Common myeloid progenitor, CD34-positive (primary cell): ENCODE measurements at regions of chr2 and their contacts with region 1.

Region 1: DNA sequence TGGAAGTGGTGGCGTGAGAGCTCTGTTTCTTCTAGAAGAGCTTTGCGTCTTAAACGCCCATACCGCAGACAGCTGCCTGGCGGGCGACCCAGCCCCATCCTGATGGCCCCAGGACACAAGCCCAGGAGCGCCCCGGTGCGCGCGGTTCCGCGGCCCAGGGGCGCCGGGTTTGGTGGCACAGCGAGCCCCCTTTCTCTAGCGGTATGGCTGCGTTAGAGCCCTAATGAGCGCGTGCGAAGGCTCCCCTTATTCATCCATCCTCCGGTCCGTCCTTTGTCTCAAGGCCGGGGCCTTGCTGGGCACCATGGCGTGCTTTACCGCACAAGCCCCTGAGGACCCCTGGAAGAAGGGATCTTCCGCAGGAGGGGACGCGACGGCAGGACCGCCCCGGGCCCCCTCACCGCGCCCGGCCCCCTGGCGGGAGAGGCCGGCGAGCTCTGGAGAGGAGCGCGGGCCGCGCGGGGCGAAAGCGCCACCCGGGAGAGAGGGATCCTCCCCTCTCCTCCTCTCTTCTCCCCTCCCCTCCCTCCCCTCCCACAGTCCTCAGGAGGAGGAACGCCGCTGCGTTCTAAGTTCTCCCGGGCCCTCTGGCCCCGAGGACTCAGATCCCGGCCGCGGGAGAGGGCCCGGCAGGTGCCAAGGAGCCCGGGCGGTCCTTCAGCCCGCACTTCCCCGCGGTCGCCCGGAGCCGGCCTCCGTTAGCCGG is 626 bp upstream of the SLC1A4 start:
- DNase-seq: peak; percentile 77 to 98 (median 79)
- H3K4me3 ChIP-seq: peak overlapping the region; percentile 69 to 88 (median 83)
- H3K27ac ChIP-seq: peak overlapping the region; percentile 93 to 98
- H3K4me1 ChIP-seq: peaks cover 7 to 71% (median 52%) of the 10 kb centered on the region in 4 experiments
- H3K27me3 ChIP-seq: no peaks in the 10 kb centered on the region

Region 2: DNA sequence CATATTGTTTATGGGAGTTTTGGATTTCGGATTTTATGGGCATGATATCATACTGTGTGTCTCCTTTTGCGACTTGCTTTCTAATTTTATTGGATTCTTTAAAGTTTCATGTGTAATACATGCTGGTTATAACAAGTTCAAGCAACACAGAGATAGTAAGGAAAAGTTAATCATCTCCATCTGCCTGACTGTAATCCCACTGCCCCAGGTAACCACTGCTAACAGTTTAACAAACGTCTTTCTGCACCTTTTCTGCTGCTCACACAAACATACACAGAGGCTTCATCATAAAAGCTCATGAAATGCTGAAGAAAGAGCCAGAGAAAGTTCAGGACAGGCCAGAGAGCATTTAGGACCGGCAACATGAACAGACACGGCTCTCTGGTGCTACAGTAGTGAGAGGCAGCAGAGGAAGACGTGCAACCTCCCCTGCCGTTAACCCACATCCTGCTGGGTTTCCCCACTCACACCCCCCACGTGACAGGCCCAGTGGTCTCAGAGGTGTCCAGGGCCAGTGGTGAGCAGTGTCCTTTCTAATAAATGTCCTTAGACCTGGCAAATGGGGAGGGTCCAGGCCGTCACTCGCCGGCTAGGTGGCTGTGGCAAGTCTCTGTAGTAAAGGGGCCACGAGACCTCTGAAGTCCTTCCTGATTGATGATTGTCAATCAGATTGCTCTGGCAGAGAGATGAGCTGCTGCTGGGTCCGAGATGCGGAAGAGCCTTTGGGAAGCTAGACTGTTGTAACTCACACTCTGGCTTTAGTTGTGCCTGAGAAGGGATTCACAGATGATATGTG is 42.4 kb before region 1 on chr2:
- CTCF ChIA-PET with region 1: interaction called, 12 read pairs
- POLR2A ChIA-PET with region 1: interaction called, 10 read pairs
- DNase-seq: peak; percentile 52 to 82 (median 78)
- H3K4me3 ChIP-seq: peak overlapping the region in 5 of 7 experiments; percentile 0 to 55 (median 50)
- H3K27ac ChIP-seq: peak overlapping the region; percentile 89 to 91
- H3K4me1 ChIP-seq: peaks cover 15 to 82% (median 76%) of the 10 kb centered on the region in 4 experiments
- H3K27me3 ChIP-seq: no peaks in the 10 kb centered on the region

Region 3: DNA sequence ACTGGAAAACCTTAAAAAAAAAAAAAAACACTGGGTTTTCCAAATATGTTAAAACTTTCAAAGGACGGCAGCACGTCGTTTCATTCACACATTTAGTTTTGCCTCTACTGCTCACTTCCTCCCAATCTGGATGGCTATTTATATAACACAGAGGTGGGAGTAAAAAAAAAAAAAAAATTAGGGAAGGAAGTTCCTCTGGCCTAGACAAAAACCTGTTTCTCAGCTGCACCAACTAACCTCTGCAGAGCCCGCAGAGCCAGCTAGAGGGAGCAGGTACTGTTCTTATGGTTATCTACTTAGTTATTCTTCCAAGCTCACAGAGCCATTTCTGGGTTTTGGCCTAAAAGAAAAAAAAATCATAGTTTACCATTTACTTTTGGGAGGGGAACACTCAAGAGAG is 28.8 kb after region 1 on chr2:
- CTCF ChIA-PET with region 1: interaction called, 13 read pairs
- POLR2A ChIA-PET with region 1: interaction called, 9 read pairs
- DNase-seq: peak; percentile 90 to 92 (median 91)
- H3K4me3 ChIP-seq: peak overlapping the region in 3 of 7 experiments; percentile 7 to 62 (median 53)
- H3K27ac ChIP-seq: no peak overlapping the region
- H3K4me1 ChIP-seq: peaks cover 18 to 40% (median 37%) of the 10 kb centered on the region in 4 experiments
- H3K27me3 ChIP-seq: no peaks in the 10 kb centered on the region

Region 4: DNA sequence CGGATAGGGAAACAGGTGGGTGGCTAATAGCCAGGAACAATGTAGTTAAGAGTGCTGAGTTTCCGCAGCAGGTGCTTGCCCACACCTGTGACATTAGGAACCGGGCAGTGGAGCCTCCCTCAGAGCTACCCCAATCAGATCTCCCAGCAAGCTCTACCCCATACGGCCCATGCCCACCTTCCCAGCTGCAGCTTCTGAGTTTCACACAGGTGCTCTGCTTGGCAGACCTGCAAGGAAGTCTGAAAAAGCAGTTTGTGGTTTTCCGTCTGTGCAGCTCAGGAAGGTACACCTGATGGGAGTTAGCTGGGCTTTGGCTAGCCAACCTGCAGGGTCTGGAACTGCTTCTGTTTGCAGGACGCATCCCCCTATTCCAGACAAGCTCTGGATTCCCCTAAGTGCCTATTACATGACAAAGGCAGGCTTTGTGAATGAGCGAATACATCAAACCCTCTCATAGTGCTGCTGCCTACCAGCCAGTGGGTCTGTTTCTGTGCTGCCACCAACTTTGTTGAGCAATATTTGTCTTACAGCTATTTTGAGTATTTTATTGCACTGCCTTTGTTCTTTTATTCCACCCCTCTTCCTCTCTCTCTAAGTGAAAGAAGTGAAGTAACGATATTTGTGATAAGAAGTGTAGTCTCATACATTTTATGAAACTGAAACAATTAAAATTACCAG is 42.9 kb after region 1 on chr2:
- CTCF ChIA-PET with region 1: interaction called, 11 read pairs
- POLR2A ChIA-PET with region 1: no interaction called
- DNase-seq: peak in 2 of 3 donors; percentile 29 to 34
- H3K4me3 ChIP-seq: peak overlapping the region in 2 of 7 experiments; percentile 14 to 37
- H3K27ac ChIP-seq: no peak overlapping the region
- H3K4me1 ChIP-seq: peaks cover 9 to 33% (median 20%) of the 10 kb centered on the region in 4 experiments
- H3K27me3 ChIP-seq: no peaks in the 10 kb centered on the region